ENCODE measurements at regions of chr17 and their contacts with region 1.

Region 1: DNA sequence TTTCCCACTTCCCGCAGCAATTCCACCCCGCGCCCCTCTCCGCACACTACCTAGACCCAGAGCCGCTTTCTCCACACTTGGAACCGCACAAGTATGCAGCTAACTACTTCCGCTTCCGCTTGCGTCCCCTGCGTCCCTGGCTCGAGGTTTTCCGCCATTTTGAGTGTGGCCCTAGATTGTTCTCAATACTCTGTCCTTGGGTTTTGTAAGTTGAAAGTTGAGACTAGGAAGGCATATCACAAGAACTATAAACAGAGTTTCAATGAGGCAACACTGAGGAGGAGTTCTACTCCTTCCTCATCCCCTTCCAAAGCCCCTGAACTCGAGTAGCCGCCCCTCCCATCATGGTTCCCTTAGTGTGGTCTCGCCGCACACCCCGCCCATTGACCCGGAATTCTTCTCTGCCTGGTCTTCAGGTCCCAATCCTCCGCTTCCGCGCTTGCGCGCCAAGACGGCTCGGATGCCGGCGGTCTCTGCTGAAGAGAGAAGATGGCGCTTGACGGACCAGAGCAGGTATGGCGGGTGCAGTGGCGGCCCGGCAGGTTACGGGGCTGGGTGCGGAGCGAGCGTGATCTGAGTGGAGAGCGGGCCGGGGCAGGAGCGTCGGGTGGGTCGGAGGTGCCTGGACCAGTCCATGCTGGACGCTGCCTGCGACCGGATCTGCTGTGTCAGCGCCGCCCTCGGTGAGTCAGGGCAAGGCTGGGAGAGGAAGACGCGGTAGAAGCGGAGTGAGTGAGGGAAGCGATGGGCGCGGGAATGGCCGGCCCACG is at the starts of genes FTSJ3 and PSMC5:
- DNase-seq: peak; percentile 98
- ATAC-seq: peak; percentile 94
- H3K4me3 Mint-ChIP-seq: peak within 1 kb of the TSS; percentile 100
- H3K27ac Mint-ChIP-seq: peak within 1 kb of the TSS; percentile 100
- H3K4me1 Mint-ChIP-seq: peaks cover 78% of the 10 kb centered on the region
- H3K27me3 Mint-ChIP-seq: no peaks in the 10 kb centered on the region
- CTCF ChIP-seq: peak; percentile 50
- total RNA-seq, gene FTSJ3: 58.3 to 60.9 TPM
- total RNA-seq, gene PSMC5: 155 to 157 TPM

Region 2: GRCh38 chr17:63809970-63810369 is 17.2 kb before region 1 on chr17:
- CTCF ChIA-PET with region 1: interaction called, 3 read pairs
- POLR2A ChIA-PET with region 1: interaction called, 21 read pairs
- intact Hi-C with region 1: no loop called
- DNase-seq: no peak
- ATAC-seq: no peak
- H3K4me3 Mint-ChIP-seq: no peak overlapping the region
- H3K27ac Mint-ChIP-seq: no peak overlapping the region
- H3K4me1 Mint-ChIP-seq: peaks cover 15% of the 10 kb centered on the region
- H3K27me3 Mint-ChIP-seq: no peaks in the 10 kb centered on the region
- CTCF ChIP-seq: no peak

Region 3: GRCh38 chr17:63842540-63843386 is 15.6 kb after region 1 on chr17 and contains the start of gene SMARCD2:
- CTCF ChIA-PET with region 1: interaction called, 22 read pairs
- POLR2A ChIA-PET with region 1: interaction called, 188 read pairs
- intact Hi-C with region 1: no loop called
- DNase-seq: peak; percentile 99
- ATAC-seq: peak; percentile 92
- H3K4me3 Mint-ChIP-seq: peak within 1 kb of the TSS; percentile 98
- H3K27ac Mint-ChIP-seq: peak within 1 kb of the TSS; percentile 95
- H3K4me1 Mint-ChIP-seq: peaks cover 23% of the 10 kb centered on the region
- H3K27me3 Mint-ChIP-seq: no peaks in the 10 kb centered on the region
- CTCF ChIP-seq: no peak
- total RNA-seq, gene SMARCD2: 99.4 to 103 TPM

Region 4: DNA sequence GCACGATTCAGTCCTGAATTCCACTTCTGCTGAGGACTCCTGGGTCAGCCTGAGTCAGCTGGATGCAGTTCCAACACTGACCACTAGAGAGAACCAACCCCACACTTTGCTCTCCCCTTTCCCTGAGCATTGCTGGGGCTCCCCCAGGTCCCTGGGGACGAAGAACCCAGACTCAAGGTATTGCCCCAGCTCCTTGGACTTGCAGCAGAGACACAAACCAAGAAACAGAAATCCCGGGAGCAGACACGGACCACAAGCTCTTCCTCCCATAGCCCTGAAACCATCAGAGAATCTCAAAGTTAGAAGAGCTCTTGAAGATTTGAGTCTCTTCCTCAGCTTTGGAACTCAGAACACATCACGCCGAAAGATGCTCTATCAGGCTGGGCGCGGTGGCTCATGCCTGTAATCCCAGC is 92.1 kb after region 1 on chr17:
- CTCF ChIA-PET with region 1: no interaction called
- POLR2A ChIA-PET with region 1: no interaction called
- intact Hi-C with region 1: no loop called
- DNase-seq: peak; percentile 80
- ATAC-seq: peak; percentile 99
- H3K4me3 Mint-ChIP-seq: no peak overlapping the region
- H3K27ac Mint-ChIP-seq: no peak overlapping the region
- H3K4me1 Mint-ChIP-seq: peaks cover 5% of the 10 kb centered on the region
- H3K27me3 Mint-ChIP-seq: no peaks in the 10 kb centered on the region
- CTCF ChIP-seq: peak; percentile 95